ENCODE measurements at regions of chr2 and their contacts with region 1.

Region 1: DNA sequence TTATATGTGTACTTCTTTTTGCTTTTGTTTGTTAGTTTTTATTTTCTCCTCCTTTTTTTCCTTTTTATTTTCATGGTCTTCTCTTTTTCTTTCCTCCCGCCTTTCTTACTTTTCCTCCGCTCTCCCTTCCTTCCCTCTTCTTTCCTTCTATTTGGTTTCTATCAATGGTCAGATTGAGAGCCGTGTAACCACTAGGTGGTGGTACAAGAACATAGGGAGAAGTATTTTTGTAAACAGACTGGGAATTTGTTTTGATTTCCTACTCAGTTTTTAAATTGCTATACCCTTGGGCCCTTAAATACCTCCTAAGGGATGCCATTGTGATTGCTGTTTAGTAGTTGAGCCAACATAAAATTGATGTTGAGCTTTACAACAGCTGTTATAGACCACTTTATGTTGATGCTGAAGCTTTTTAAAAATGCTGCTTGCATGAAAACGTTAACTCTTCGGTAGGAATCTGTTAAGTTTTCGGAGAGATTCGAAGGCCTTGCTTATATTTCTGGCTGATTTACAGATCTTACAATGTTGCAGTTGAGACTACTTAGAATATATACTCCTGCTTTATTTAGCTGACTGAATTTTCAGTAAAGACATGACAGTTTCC is 124.2 kb downstream of the UBE2E3 start:
- DNase-seq: peak; percentile 74
- H3K4me3 ChIP-seq: no peak overlapping the region
- H3K27ac ChIP-seq: no peak overlapping the region
- H3K4me1 ChIP-seq: peaks cover 33% of the 10 kb centered on the region
- H3K27me3 ChIP-seq: no peaks in the 10 kb centered on the region

Region 2: GRCh38 chr2:181430406-181431118 is 325.9 kb after region 1 on chr2:
- in situ Hi-C with region 1: no loop called
- DNase-seq: peak; percentile 20
- H3K4me3 ChIP-seq: no peak overlapping the region
- H3K27ac ChIP-seq: no peak overlapping the region
- H3K4me1 ChIP-seq: no peaks in the 10 kb centered on the region
- H3K27me3 ChIP-seq: no peaks in the 10 kb centered on the region

Region 3: GRCh38 chr2:181457121-181457740 is 352.6 kb after region 1 on chr2 and contains the start of gene ITGA4:
- in situ Hi-C with region 1: loop called (anchors 5 kb)
- DNase-seq: peak; percentile 91
- H3K4me3 ChIP-seq: peak within 1 kb of the TSS; percentile 91
- H3K27ac ChIP-seq: peak within 1 kb of the TSS; percentile 26
- H3K4me1 ChIP-seq: peaks cover 22% of the 10 kb centered on the region
- H3K27me3 ChIP-seq: no peaks in the 10 kb centered on the region
- total RNA-seq, gene ITGA4: 33.3 and 40.0 TPM in 2 replicates

Measured in GM23248 (cell line).